ENCODE measurements at regions of chr13 and their contacts with region 1.

Region 1: GRCh38 chr13:97124916-97125809 is 97.0 kb upstream of the MBNL2 start:
- DNase-seq: peak in 1 of 10 donors; percentile 44
- H3K4me3 ChIP-seq: peak overlapping the region in 15 of 59 donors; percentile 3 to 30 (median 15)
- H3K27ac ChIP-seq: peak overlapping the region in 52 of 59 donors; percentile 5 to 86 (median 61)
- H3K27me3 ChIP-seq: no peaks in the 10 kb centered on the region
- CTCF ChIP-seq: peak in 45 of 56 donors; percentile 11 to 58 (median 36)

Region 2: DNA sequence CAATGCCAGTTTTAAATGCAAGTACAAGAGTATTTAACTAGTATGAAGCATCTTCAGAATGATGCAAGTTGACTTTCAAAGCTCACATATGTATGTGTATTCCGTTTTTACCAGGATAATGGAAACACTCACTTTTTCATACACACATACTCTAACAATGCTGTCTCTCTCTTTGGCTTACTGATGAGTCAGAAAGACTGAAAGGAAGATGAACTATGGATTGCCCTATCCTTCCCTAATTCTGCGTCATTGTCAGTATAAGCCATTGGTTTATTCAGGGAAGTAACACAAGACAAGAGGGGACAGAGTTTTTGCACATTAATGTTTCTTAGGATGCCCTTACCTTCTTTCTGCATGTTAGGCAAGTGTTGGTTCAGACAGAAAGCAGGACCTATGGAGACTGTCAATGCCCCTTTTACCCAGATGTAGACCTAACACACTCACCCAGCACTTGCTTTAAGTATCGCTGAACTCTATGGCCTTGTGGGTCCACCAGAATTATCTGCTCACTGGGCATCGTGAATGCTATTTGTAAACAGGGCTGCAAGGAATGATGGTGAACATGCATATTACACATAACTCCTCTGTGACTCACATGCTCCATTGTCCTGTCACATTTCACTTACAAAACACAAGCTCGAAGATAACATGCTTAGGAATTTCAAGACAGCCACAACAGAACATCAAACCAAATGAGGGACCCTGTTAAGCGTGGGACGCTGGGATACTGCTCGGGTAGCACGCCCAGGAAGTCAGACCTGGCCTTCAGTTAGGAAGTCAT is 120.9 kb before region 1 on chr13:
- intact Hi-C with region 1: no loop called
- DNase-seq: no peak
- H3K4me3 ChIP-seq: no peak overlapping the region
- H3K27ac ChIP-seq: no peak overlapping the region
- H3K27me3 ChIP-seq: no peaks in the 10 kb centered on the region
- CTCF ChIP-seq: no peak

Region 3: DNA sequence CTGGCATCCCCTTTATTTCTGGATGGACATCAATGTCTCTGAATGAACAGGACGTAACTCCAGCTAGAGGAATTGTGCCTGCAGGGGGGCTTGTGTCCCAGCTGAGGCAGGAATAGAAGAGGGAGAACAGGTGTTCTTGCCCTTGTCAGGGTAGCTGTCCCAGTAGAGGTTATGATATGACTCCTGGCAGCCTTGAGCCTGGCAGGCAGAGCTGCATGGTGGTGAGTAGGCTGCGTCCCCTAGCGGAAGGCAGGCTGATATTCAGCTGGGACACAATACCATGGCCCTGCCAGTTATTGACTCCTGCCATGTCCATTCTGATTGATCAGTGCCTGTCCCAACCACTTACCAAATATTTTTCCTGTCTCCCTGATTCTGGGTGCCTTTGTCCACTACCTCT is 506.0 kb after region 1 on chr13:
- intact Hi-C with region 1: loop called in 1 of 2 experiments (anchors 10 kb)
- DNase-seq: no peak
- H3K4me3 ChIP-seq: no peak overlapping the region
- H3K27ac ChIP-seq: peak overlapping the region in 2 of 59 donors; percentile 65 to 73
- H3K27me3 ChIP-seq: no peaks in the 10 kb centered on the region
- CTCF ChIP-seq: no peak